ENCODE measurements at regions of chr4 and their contacts with region 1.

Region 1: GRCh38 chr4:83284193-83285054 is at the start of gene COQ2:
- DNase-seq: peak; percentile 97
- H3K4me3 Mint-ChIP-seq: peak within 1 kb of the TSS; percentile 93
- H3K27ac Mint-ChIP-seq: peak within 1 kb of the TSS; percentile 91
- H3K4me1 Mint-ChIP-seq: peaks cover 34% of the 10 kb centered on the region
- H3K27me3 Mint-ChIP-seq: no peaks in the 10 kb centered on the region
- total RNA-seq, gene COQ2: 18.7 to 19.5 TPM

Region 2: DNA sequence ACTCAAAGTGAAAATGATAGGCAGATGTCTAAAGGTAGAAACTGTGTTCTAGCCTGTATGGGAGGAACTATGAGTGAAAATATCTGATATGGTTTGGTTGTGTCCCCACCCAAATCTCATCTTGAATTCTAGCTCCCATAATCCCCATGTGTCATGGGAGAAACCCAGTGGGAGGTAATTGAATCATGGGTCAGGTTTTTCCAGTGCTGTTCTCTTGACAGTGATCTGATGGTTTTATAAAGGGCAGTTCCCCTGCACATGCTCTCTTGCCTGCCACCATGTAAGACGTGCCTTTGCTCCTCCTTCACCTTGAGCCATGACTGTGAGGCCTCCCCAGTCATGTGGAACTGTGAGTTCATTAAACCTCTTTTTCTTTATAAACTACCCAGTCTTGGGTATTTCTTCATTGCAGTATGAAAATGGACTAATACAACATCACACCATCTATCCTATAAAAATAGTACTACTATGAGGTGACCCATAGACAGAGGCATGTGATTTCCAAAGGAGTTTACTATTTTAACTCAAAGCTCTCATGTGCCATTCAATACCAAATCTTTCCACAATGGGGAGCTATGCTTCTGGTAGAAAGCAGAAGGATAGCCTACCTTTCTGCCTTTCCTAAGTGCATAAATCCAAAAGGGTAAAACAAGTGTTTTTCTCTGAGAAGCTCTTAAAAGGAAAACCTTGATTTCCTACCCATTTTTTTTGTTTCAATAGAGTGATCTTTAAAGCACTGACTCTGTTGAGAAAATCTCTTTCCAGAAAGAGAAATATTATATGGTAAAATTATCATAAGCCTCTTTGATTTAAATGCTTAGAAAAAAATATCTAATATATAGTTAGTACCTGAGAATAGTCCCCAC is 432.3 kb before region 1 on chr4:
- CTCF ChIA-PET with region 1: interaction called, 4 read pairs
- intact Hi-C with region 1: loop called (anchors 1 kb)
- DNase-seq: no peak
- H3K4me3 Mint-ChIP-seq: no peak overlapping the region
- H3K27ac Mint-ChIP-seq: no peak overlapping the region
- H3K4me1 Mint-ChIP-seq: peaks cover 6% of the 10 kb centered on the region
- H3K27me3 Mint-ChIP-seq: no peaks in the 10 kb centered on the region

Region 3: GRCh38 chr4:83040269-83040668 is 244.2 kb before region 1 on chr4:
- CTCF ChIA-PET with region 1: interaction called, 18 read pairs
- intact Hi-C with region 1: loop called (anchors 1 kb)
- DNase-seq: no peak
- H3K4me3 Mint-ChIP-seq: no peak overlapping the region
- H3K27ac Mint-ChIP-seq: no peak overlapping the region
- H3K4me1 Mint-ChIP-seq: peaks cover 52% of the 10 kb centered on the region
- H3K27me3 Mint-ChIP-seq: no peaks in the 10 kb centered on the region

Region 4: DNA sequence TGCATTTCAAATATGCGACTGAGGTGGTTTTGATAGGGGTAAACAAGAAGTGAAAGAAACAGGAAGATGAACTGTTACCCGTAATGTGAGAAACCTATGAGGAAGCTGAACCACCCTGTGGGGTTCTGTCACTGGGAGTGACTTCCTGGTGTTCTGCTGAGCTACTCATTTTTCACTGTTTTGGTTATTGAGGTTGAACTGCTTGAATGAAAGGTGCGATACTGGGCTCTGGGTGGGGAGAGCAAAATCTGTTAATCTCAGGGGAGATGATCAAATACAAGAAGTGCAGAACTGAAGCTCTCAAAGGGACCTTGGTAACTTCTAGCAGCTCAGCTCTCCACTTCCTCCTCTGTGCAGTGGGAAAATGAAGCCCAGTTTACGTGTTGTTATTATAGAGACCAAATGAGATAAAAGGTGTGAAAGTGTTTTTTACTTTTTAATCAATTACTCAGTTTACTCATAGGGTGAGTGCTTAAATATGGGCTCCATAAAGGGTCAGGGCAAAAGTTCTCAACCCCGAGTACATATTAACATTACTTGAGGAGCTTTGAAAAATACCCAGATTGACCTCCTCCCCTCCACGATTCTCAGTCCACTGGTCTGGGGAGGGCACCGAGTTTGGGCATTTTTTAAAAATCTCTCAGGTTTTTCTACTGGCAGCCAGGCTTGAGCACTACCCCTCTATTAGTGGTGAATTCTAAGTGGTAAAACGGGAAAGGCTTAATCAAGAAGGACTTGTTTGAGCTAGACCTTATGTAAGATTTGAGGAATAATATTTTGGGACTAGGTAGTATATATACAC is 66.5 kb before region 1 on chr4:
- CTCF ChIA-PET with region 1: interaction called, 3 read pairs
- intact Hi-C with region 1: loop called (anchors 1 kb)
- DNase-seq: peak; percentile 82
- H3K4me3 Mint-ChIP-seq: peak overlapping the region; percentile 28
- H3K27ac Mint-ChIP-seq: peak overlapping the region; percentile 92
- H3K4me1 Mint-ChIP-seq: peaks cover 65% of the 10 kb centered on the region
- H3K27me3 Mint-ChIP-seq: no peaks in the 10 kb centered on the region

Region 5: DNA sequence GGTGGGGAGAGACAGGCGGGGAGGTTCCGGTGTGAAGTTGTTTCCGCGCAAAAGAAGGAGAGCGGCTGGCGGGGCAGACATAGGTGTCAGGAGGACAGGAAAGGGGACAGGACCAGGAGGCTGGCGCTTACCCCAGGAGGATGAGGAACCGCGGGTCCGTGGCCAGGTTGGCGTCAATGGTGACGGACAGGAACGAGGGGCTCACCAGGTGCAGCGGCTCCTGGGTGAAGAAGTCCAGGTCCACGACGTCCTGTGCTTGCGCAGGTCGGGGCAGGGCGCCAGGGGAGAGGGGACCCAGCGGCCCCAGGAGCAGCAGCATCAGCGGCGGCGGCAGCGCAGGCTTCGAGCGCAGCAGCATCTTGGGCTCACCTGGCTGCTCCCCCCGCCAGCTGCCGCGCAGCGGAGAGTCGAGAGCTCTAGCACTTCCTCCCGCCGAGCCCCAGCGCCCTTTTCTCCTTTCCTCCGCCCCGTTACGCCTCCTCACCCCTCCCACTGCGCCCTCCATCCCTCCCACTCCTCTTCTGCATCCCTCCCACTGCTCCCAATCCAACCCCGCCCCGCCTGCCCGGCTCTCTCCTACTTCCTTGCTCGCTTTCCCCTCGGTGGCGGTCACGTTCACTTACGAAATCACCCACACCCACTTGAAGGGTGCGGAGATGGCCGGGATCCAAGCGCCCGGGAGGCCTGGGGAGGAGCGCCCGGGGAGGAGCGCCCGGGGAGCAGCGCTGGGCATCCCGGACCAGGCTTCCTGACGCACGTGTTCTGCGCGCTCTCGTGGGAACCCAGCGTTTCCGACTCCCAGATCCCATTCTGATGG is 50.2 kb after region 1 on chr4 and contains the start of gene HPSE:
- CTCF ChIA-PET with region 1: no interaction called
- intact Hi-C with region 1: loop called (anchors 1 kb)
- DNase-seq: peak; percentile 81
- H3K4me3 Mint-ChIP-seq: peak within 1 kb of the TSS; percentile 84
- H3K27ac Mint-ChIP-seq: peak within 1 kb of the TSS; percentile 51
- H3K4me1 Mint-ChIP-seq: peaks cover 16% of the 10 kb centered on the region
- H3K27me3 Mint-ChIP-seq: peaks cover under 1% of the 10 kb centered on the region
- total RNA-seq, gene HPSE: 13.5 to 16.1 TPM

Region 6: DNA sequence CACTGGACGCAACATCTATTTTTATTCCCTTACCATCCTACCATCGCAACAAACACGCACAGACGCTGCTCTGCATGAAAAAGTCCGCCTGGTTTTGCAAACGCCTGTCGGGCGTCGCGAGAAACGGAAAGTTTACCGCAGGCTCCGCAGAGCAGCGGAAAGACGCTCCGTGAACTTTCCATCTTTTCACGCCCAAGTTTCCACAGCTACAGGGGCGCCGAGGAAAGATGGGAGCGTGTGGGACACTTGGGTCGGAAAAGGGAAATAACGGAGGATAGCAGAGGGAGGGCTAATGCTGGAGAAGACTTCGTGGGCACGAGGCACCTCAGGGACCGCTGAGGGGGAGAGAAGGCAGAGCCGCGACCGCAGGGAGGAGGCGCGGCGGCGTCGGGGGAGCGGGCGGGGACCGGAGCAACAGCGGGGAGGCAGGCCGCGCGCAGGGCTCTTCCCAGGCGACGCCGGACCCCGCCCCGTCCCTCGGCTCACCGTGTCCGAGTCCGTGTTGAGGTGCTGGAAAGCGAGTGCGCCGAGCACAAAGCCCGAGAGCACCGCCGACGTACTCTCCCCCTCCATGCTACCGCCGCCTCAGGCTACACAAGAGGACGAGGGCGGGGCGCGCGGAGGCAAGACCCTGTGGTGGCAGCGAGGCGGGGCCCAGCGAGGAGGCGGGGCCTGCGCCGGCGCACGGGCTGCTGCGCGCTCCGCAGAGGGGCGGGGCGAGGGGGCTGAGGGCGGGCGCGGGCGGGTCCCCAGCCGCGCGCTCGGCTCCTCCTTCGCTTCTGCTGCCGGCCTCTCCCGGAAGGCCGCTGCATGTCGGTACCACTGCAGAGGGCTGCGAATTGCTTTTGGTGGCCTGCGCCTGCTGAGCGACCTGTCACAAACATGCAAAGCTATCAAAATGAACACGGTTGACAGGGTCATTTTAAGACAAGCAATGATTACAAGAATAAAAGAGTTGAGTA is 200.4 kb after region 1 on chr4 and contains the start of gene ABRAXAS1:
- CTCF ChIA-PET with region 1: interaction called, 3 read pairs
- intact Hi-C with region 1: loop called (anchors 1 kb)
- DNase-seq: peak; percentile 92
- H3K4me3 Mint-ChIP-seq: peak within 1 kb of the TSS; percentile 99
- H3K27ac Mint-ChIP-seq: peak within 1 kb of the TSS; percentile 91
- H3K4me1 Mint-ChIP-seq: peaks cover 19% of the 10 kb centered on the region
- H3K27me3 Mint-ChIP-seq: no peaks in the 10 kb centered on the region
- total RNA-seq, gene ABRAXAS1: 19.7 to 20.9 TPM